ENCODE measurements at regions of chr16 and their contacts with region 1.

Region 1: GRCh38 chr16:30571695-30572600 is at the start of gene ZNF688:
- DNase-seq: peak; percentile 92 to 98 (median 96)
- H3K4me3 ChIP-seq: peak within 1 kb of the TSS; percentile 78
- H3K4me3 Mint-ChIP-seq: peak within 1 kb of the TSS; percentile 87 to 96 (median 91)
- H3K27ac ChIP-seq: peak within 1 kb of the TSS; percentile 92
- H3K27ac Mint-ChIP-seq: peak within 1 kb of the TSS; percentile 89 to 99 (median 96)
- H3K4me1 ChIP-seq: peaks cover 44% of the 10 kb centered on the region
- H3K4me1 Mint-ChIP-seq: peaks cover 20 to 47% (median 31%) of the 10 kb centered on the region in 3 donors
- H3K27me3 ChIP-seq: no peaks in the 10 kb centered on the region
- H3K27me3 Mint-ChIP-seq: no peaks in the 10 kb centered on the region
- total RNA-seq, gene ZNF688: 9.6 to 10.8 TPM

Region 2: DNA sequence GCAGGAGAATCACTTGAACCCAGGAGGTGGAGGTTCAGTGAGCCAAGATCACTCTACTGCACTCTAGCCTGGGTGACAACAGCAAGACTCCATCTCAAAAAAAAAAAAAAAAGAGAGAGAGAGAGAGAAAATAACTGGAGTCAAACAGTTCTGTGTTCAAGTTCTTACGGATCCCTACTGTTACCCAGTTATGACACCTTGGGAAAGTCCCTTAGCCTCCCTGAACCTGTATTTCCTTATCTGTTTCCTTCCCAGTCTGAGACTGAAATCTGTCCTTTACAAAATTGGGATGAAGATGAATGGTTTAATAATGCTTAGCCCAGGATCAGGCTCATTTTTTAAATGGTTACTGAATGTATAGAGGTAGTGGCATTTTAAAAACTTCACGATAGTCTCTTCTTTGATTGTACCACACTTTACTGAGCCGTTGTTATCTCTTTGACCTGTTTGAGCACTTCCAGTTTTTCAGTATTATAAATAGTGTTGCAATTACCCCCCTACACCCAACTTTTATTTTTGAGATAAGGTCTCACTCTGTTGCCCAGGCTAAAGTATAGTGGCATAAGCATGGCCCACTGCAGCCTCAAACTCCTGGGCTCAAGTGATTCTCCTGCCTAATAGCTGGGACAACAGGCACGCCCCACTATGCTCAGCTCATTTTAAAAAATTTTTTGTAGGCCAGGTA is 62.7 kb before region 1 on chr16:
- CTCF ChIA-PET with region 1: no interaction called
- POLR2A ChIA-PET with region 1: no interaction called
- DNase-seq: no peak
- H3K4me3 ChIP-seq: no peak overlapping the region
- H3K4me3 Mint-ChIP-seq: no peak overlapping the region
- H3K27ac ChIP-seq: no peak overlapping the region
- H3K27ac Mint-ChIP-seq: peak overlapping the region in 5 of 8 donors; percentile 21 to 89 (median 43)
- H3K4me1 ChIP-seq: no peaks in the 10 kb centered on the region
- H3K4me1 Mint-ChIP-seq: peaks cover 3 to 24% (median 13%) of the 10 kb centered on the region in 3 donors
- H3K27me3 ChIP-seq: no peaks in the 10 kb centered on the region
- H3K27me3 Mint-ChIP-seq: no peaks in the 10 kb centered on the region

Region 3: DNA sequence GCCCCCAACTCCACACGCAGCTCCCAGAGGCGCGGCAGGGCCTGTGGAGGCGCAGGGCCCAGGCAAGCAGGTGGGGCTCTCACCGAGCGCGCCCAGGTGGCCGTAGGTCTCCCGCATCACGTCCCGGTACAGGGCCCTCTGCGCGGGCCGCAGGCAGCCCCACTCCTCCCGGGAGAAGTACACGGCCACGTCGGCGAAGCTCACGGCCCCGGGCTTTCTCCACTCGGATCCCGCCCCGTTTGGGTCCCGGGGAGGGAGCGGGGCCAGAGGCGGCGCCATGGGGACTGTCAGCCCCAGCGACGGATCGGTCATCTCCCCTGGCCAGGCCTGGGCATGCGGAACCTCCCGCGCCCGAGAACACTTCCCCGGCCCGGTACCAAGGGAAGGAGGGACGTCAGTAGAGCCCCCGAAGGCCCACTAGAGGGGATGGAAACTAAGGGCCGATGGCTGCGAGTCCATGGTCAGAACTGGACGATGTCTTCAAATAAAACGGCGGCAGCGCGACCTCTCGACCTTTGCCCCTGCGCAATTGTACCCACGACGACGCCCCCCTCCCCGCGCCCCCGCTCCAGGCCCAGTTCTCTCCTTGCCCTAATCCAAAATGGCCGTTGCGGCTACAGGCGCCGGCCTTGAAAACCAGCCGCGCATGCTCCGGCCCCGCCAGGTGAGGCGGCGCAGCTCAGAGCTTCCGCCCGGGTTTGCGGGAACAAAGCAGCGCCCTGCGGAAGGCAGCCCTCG is 37.4 kb before region 1 on chr16 and contains the start of gene ZNF747:
- CTCF ChIA-PET with region 1: interaction called, 23 read pairs
- POLR2A ChIA-PET with region 1: interaction called, 33 read pairs
- DNase-seq: peak; percentile 86 to 94 (median 87)
- H3K4me3 ChIP-seq: peak within 1 kb of the TSS; percentile 98
- H3K4me3 Mint-ChIP-seq: peak within 1 kb of the TSS; percentile 89 to 98 (median 92)
- H3K27ac ChIP-seq: peak within 1 kb of the TSS; percentile 91
- H3K27ac Mint-ChIP-seq: peak within 1 kb of the TSS; percentile 92 to 99 (median 98)
- H3K4me1 ChIP-seq: peaks cover 20% of the 10 kb centered on the region
- H3K4me1 Mint-ChIP-seq: peaks cover 18 to 39% (median 25%) of the 10 kb centered on the region in 3 donors
- H3K27me3 ChIP-seq: no peaks in the 10 kb centered on the region
- H3K27me3 Mint-ChIP-seq: no peaks in the 10 kb centered on the region
- total RNA-seq, gene ZNF747: 13.5 to 17.0 TPM

Region 4: GRCh38 chr16:30551781-30552180 is 20.2 kb before region 1 on chr16:
- CTCF ChIA-PET with region 1: interaction called, 19 read pairs
- POLR2A ChIA-PET with region 1: interaction called, 55 read pairs
- DNase-seq: peak; percentile 59 to 86 (median 71)
- H3K4me3 ChIP-seq: peak overlapping the region; percentile 37
- H3K4me3 Mint-ChIP-seq: peak overlapping the region; percentile 64 to 89 (median 80)
- H3K27ac ChIP-seq: peak overlapping the region; percentile 24
- H3K27ac Mint-ChIP-seq: peak overlapping the region; percentile 82 to 97 (median 94)
- H3K4me1 ChIP-seq: peaks cover 42% of the 10 kb centered on the region
- H3K4me1 Mint-ChIP-seq: peaks cover 50 to 75% (median 58%) of the 10 kb centered on the region in 3 donors
- H3K27me3 ChIP-seq: no peaks in the 10 kb centered on the region
- H3K27me3 Mint-ChIP-seq: peaks cover 0 to 3% of the 10 kb centered on the region in 2 donors

Region 5: DNA sequence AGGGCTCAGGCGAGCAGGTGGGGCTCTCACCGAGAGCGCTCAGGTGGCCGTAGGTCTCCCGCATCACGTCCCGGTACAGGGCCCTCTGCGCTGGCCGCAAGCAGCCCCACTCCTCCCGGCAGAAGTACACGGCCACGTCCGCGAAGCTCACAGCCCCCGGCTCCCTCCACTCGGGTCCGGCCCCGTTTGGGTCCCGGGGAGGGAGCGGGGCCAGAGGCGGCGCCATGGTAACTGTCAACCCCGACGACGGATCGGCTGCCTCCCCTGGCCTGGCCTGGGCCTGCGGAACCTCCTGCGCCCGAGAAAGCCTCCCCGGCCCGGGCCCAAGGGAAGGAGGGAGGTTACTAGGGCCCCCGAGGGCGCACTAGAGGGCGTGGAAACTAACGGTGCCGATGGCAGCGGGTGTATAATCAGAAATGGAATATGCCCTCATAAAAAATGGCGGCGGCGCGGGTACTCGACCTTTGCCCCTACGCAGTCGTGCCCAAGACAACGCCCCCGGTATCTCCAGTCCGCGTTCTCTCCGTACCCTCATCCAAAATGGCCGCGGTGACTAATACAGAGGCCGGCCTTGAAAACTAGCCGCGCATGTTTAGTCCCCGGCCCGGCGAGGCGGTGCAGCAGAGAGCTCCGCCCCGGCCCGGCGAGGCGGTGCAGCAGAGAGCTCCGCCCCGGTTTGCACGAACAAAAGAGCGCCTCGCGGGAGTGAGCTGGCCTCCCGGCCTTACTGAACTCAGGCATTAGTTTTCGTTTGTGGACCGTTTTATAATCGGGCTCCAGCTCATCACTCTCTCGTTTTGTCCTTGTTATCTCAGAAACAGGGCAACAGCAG is 13.8 kb before region 1 on chr16 and contains the start of gene ZNF764:
- CTCF ChIA-PET with region 1: interaction called, 19 read pairs
- POLR2A ChIA-PET with region 1: interaction called, 55 read pairs
- DNase-seq: peak; percentile 92 to 98 (median 95)
- H3K4me3 ChIP-seq: peak within 1 kb of the TSS; percentile 90
- H3K4me3 Mint-ChIP-seq: peak within 1 kb of the TSS; percentile 85 to 95 (median 89)
- H3K27ac ChIP-seq: peak within 1 kb of the TSS; percentile 93
- H3K27ac Mint-ChIP-seq: peak within 1 kb of the TSS; percentile 87 to 97 (median 92)
- H3K4me1 ChIP-seq: peaks cover 27% of the 10 kb centered on the region
- H3K4me1 Mint-ChIP-seq: peaks cover 38 to 63% (median 40%) of the 10 kb centered on the region in 3 donors
- H3K27me3 ChIP-seq: no peaks in the 10 kb centered on the region
- H3K27me3 Mint-ChIP-seq: peaks cover 0 to 2% of the 10 kb centered on the region in 2 donors
- total RNA-seq, gene ZNF764: 15.1 to 15.7 TPM

Region 6: DNA sequence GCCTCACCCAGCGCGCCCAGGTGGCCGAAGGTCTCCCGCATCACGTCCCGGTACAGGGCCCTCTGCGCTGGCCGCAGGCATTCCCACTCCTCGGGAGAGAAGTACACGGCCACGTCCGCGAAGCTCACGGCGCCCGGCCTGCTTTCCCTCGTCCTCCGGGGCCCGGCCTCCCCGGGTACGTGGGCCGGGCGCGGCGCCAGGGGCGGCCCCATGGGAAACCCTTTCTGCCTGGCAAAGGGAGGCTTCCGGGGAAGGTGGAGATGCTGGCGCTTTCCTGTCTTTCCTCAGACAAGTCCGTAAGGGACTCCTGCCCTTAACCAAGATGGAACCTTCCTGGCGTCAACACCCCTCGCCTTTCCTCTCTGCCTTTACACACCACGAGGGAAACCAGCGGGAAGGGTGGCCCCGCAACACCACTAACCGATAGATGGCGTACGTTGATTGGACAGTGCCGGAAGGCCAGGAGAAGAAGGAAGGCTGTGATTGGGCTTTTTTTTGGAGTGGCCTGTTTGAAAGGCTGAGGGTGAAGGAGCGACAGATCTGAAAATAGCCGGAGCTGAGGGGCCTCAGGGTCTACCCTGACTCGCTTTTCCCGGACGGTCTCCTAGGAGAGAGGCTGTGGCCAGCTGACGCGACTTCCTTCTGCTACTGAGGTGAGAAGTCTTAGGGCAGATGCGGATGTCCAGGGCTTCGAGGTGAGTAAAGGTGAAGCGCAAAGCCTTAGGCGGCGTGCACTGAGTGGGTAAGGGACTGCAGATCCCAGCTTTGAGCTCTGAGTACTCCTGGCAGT is 13.6 kb after region 1 on chr16 and contains the start of gene ZNF785:
- CTCF ChIA-PET with region 1: interaction called, 5 read pairs
- POLR2A ChIA-PET with region 1: interaction called, 20 read pairs
- DNase-seq: peak; percentile 83 to 96 (median 92)
- H3K4me3 ChIP-seq: peak within 1 kb of the TSS; percentile 95
- H3K4me3 Mint-ChIP-seq: peak within 1 kb of the TSS; percentile 81 to 91 (median 88)
- H3K27ac ChIP-seq: peak within 1 kb of the TSS; percentile 71
- H3K27ac Mint-ChIP-seq: peak within 1 kb of the TSS; percentile 72 to 92 (median 90)
- H3K4me1 ChIP-seq: peaks cover 12% of the 10 kb centered on the region
- H3K4me1 Mint-ChIP-seq: peaks cover 24 to 32% (median 29%) of the 10 kb centered on the region in 3 donors
- H3K27me3 ChIP-seq: no peaks in the 10 kb centered on the region
- H3K27me3 Mint-ChIP-seq: peaks cover 0 to 3% of the 10 kb centered on the region in 2 donors
- total RNA-seq, gene ZNF785: 10.9 to 13.0 TPM

Region 7: GRCh38 chr16:30669896-30670797 is 98.2 kb after region 1 on chr16:
- CTCF ChIA-PET with region 1: no interaction called
- POLR2A ChIA-PET with region 1: interaction called, 11 read pairs
- DNase-seq: no peak
- H3K4me3 ChIP-seq: no peak overlapping the region
- H3K4me3 Mint-ChIP-seq: no peak overlapping the region
- H3K27ac ChIP-seq: no peak overlapping the region
- H3K27ac Mint-ChIP-seq: peak overlapping the region in 1 of 8 donors; percentile 66
- H3K4me1 ChIP-seq: no peaks in the 10 kb centered on the region
- H3K4me1 Mint-ChIP-seq: peaks cover 4 to 17% (median 4%) of the 10 kb centered on the region in 3 donors
- H3K27me3 ChIP-seq: no peaks in the 10 kb centered on the region
- H3K27me3 Mint-ChIP-seq: no peaks in the 10 kb centered on the region

Region 8: DNA sequence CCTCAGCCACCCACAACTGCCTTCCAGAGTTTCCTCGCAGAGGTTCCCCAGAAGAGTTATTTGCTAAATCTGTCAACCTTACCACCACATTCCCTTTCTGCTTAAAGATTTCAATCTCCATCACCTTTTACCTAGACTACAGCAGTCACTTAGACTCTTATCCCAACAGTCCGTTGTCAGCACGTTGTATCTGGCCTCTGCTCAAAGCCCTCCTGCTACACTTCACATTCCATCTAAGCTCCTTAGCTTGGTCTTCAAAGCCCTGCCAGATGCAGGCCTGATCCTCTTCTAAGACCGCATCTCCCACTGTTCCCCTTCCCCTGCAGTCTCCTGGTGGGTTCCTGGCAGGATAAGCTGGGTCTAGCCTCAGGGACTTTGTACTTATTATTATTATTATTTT is 116.7 kb after region 1 on chr16:
- CTCF ChIA-PET with region 1: no interaction called
- POLR2A ChIA-PET with region 1: no interaction called
- DNase-seq: no peak
- H3K4me3 ChIP-seq: no peak overlapping the region
- H3K4me3 Mint-ChIP-seq: no peak overlapping the region
- H3K27ac ChIP-seq: no peak overlapping the region
- H3K27ac Mint-ChIP-seq: no peak overlapping the region
- H3K4me1 ChIP-seq: peaks cover 4% of the 10 kb centered on the region
- H3K4me1 Mint-ChIP-seq: peaks cover 2 to 8% (median 6%) of the 10 kb centered on the region in 3 donors
- H3K27me3 ChIP-seq: no peaks in the 10 kb centered on the region
- H3K27me3 Mint-ChIP-seq: no peaks in the 10 kb centered on the region

Measured in CD8-positive, alpha-beta memory T cell (primary cell).